PC-9 (cell line): ENCODE measurements at regions of chr3 and their contacts with region 1.

Region 1: DNA sequence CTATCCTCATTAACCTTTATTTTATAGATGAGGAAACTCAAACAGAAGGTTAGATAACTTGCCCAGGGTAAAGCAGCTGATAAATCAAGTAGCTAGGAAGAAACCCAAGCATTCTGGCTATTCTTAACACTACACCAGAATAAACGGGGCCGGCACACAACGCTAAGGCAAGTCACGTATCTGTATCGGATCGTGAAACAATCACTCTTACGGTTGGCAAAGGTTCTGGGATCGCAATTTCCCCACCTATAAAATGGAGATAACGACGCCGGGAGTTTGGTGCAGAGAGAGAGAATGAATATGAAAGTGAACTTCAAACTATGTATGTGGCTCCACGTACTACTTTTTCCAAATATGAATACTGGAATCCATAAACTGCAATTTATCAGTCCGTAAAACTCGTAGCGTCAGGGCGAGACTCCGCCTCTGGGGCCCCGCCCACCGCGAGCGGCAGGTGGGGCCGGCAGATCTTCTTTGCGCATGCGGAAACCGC is 252 bp upstream of the ARMC8 start:
- DNase-seq: peak in 1 of 2 experiments; percentile 88
- H3K4me3 ChIP-seq: peak overlapping the region; percentile 90
- H3K27ac ChIP-seq: peak overlapping the region; percentile 76
- H3K4me1 ChIP-seq: peaks cover 28% of the 10 kb centered on the region
- H3K27me3 ChIP-seq: no peaks in the 10 kb centered on the region
- CTCF ChIP-seq: no peak

Region 2: GRCh38 chr3:138263104-138263503 is 76.3 kb after region 1 on chr3:
- CTCF ChIA-PET with region 1: no interaction called
- POLR2A ChIA-PET with region 1: interaction called, 30 read pairs
- intact Hi-C with region 1: no loop called
- DNase-seq: no peak
- H3K4me3 ChIP-seq: no peak overlapping the region
- H3K27ac ChIP-seq: no peak overlapping the region
- H3K4me1 ChIP-seq: no peaks in the 10 kb centered on the region
- H3K27me3 ChIP-seq: no peaks in the 10 kb centered on the region
- CTCF ChIP-seq: no peak

Region 3: GRCh38 chr3:138389841-138390586 is 203.2 kb after region 1 on chr3:
- CTCF ChIA-PET with region 1: no interaction called
- POLR2A ChIA-PET with region 1: interaction called, 11 read pairs
- intact Hi-C with region 1: no loop called
- DNase-seq: peak; percentile 59 to 82
- H3K4me3 ChIP-seq: no peak overlapping the region
- H3K27ac ChIP-seq: no peak overlapping the region
- H3K4me1 ChIP-seq: peaks cover 12% of the 10 kb centered on the region
- H3K27me3 ChIP-seq: no peaks in the 10 kb centered on the region
- CTCF ChIP-seq: no peak

Region 4: GRCh38 chr3:139353920-139354556 is 1167.2 kb after region 1 on chr3:
- CTCF ChIA-PET with region 1: no interaction called
- POLR2A ChIA-PET with region 1: no interaction called
- intact Hi-C with region 1: loop called (anchors 10 kb)
- DNase-seq: peak; percentile 25 to 42
- H3K4me3 ChIP-seq: no peak overlapping the region
- H3K27ac ChIP-seq: no peak overlapping the region
- H3K4me1 ChIP-seq: no peaks in the 10 kb centered on the region
- H3K27me3 ChIP-seq: no peaks in the 10 kb centered on the region
- CTCF ChIP-seq: peak; percentile 74